ENCODE measurements at regions of chr19 and their contacts with region 1.

Region 1: DNA sequence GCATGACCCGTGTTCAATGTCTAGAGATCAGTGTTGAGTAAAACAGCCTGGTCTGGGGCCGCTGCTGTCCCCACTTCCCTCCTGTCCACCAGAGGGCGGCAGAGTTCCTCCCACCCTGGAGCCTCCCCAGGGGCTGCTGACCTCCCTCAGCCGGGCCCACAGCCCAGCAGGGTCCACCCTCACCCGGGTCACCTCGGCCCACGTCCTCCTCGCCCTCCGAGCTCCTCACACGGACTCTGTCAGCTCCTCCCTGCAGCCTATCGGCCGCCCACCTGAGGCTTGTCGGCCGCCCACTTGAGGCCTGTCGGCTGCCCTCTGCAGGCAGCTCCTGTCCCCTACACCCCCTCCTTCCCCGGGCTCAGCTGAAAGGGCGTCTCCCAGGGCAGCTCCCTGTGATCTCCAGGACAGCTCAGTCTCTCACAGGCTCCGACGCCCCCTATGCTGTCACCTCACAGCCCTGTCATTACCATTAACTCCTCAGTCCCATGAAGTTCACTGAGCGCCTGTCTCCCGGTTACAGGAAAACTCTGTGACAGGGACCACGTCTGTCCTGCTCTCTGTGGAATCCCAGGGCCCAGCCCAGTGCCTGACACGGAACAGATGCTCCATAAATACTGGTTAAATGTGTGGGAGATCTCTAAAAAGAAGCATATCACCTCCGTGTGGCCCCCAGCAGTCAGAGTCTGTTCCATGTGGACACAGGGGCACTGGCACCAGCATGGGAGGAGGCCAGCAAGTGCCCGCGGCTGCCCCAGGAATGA is 1.5 kb upstream of the CEACAM5 start:
- H3K4me3 ChIP-seq: peak overlapping the region; percentile 30
- H3K27ac ChIP-seq: no peak overlapping the region
- H3K4me1 ChIP-seq: peaks cover 2% of the 10 kb centered on the region; the same call in 1 of the 2 replicates
- CTCF ChIP-seq: peak; percentile 100

Region 2: GRCh38 chr19:40533508-40533907 is 1173.4 kb before region 1 on chr19:
- CTCF ChIA-PET with region 1: no interaction called
- POLR2A ChIA-PET with region 1: no interaction called
- H3K4me3 ChIP-seq: no peak overlapping the region
- H3K27ac ChIP-seq: no peak overlapping the region
- H3K4me1 ChIP-seq: peaks cover 17% of the 10 kb centered on the region
- CTCF ChIP-seq: 0 out of 2 replicates have a peak, but pooled peaks have one; percentile 6

Region 3: GRCh38 chr19:41288673-41289505 is 418.0 kb before region 1 on chr19:
- CTCF ChIA-PET with region 1: no interaction called
- POLR2A ChIA-PET with region 1: no interaction called
- H3K4me3 ChIP-seq: no peak overlapping the region
- H3K27ac ChIP-seq: peak overlapping the region; percentile 36; the same call in 1 of the 2 replicates
- H3K4me1 ChIP-seq: no peaks in the 10 kb centered on the region
- CTCF ChIP-seq: no peak

Region 4: GRCh38 chr19:41462497-41462896 is 244.4 kb before region 1 on chr19:
- CTCF ChIA-PET with region 1: no interaction called
- POLR2A ChIA-PET with region 1: no interaction called
- H3K4me3 ChIP-seq: no peak overlapping the region
- H3K27ac ChIP-seq: no peak overlapping the region
- H3K4me1 ChIP-seq: no peaks in the 10 kb centered on the region
- CTCF ChIP-seq: no peak

Region 5: GRCh38 chr19:41641879-41642485 is 64.9 kb before region 1 on chr19:
- CTCF ChIA-PET with region 1: interaction called, 41 read pairs
- POLR2A ChIA-PET with region 1: no interaction called
- H3K4me3 ChIP-seq: no peak overlapping the region
- H3K27ac ChIP-seq: no peak overlapping the region
- H3K4me1 ChIP-seq: no peaks in the 10 kb centered on the region
- CTCF ChIP-seq: peak; percentile 75

Region 6: DNA sequence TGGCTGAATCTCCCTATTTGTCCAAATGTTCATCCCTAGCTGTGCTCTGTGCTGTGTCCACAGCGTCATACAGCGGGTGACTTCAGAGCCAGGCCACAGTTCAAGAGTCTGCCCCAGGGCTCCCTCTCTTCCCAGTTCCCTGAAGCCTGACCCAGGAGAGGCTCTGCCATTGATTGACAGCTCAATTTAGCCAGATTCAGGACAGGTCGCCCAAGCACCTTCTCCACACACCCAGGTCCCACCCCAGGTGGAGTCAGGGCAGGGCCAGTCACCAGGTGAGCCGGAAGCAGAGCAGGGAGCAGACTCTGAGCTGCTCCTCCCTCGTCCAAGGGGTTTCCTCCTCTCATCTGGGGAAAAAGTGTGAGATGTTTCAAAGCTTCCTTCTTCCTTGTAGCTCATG is 24.5 kb before region 1 on chr19:
- CTCF ChIA-PET with region 1: interaction called, 15 read pairs
- POLR2A ChIA-PET with region 1: no interaction called
- H3K4me3 ChIP-seq: no peak overlapping the region
- H3K27ac ChIP-seq: no peak overlapping the region
- H3K4me1 ChIP-seq: no peaks in the 10 kb centered on the region
- CTCF ChIP-seq: no peak

Region 7: GRCh38 chr19:41734617-41735016 is 27.7 kb after region 1 on chr19:
- CTCF ChIA-PET with region 1: interaction called, 34 read pairs
- POLR2A ChIA-PET with region 1: no interaction called
- H3K4me3 ChIP-seq: no peak overlapping the region
- H3K27ac ChIP-seq: no peak overlapping the region
- H3K4me1 ChIP-seq: no peaks in the 10 kb centered on the region
- CTCF ChIP-seq: no peak

Region 8: DNA sequence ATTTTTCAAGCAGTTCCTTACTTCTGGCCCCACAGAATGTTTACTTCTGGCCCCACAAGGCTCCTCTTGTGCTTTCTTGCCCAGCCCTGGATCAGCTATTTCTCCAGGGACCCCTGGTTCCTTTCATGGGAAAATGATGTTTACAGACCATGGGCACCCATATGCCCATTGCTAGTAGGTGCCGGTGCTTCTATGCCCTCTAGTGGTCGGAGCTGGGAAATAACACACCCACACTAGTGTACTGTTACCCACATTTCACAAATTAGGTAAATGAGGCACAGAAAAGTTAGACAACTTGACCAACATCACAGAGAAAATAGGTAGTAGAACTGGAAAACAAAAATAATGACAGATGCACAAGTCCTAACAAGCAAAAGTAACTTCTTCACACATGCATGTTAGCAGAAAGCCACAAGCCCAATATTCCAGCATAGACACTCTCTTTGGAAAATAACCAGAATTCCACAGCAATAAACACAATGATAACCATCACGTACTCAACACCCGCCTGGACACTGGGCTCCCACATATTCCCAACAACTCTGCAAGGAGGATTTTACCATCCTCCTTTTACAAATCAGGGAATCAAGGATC is 47.1 kb after region 1 on chr19:
- CTCF ChIA-PET with region 1: interaction called, 26 read pairs
- POLR2A ChIA-PET with region 1: no interaction called
- H3K4me3 ChIP-seq: no peak overlapping the region
- H3K27ac ChIP-seq: no peak overlapping the region
- H3K4me1 ChIP-seq: peaks cover 6% of the 10 kb centered on the region; the same call in 1 of the 2 replicates
- CTCF ChIP-seq: peak; percentile 37; the same call in 1 of the 2 replicates

Region 9: DNA sequence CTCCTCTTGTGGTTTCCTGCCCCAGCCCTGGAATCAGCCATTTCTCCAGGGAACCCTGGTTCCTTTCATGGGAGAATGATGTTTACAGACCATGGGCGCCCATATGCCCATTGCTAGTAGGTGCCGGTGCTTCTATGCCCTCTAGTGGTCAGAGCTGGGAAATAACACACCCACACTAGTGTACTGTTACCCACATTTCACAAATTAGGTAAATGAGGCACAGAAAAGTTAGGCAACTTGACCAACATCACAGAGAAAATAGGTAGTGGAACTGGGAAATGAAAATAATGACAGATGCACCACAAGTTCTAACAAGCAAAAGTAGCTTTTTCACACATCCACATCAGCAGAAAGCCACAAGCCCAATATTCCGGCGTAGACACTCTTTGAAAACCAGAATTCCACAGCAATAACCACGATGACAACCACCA is 88.1 kb after region 1 on chr19:
- CTCF ChIA-PET with region 1: interaction called, 25 read pairs
- POLR2A ChIA-PET with region 1: no interaction called
- H3K4me3 ChIP-seq: no peak overlapping the region
- H3K27ac ChIP-seq: no peak overlapping the region
- H3K4me1 ChIP-seq: no peaks in the 10 kb centered on the region
- CTCF ChIP-seq: peak; percentile 79

Region 10: GRCh38 chr19:41821003-41821735 is 114.2 kb after region 1 on chr19:
- CTCF ChIA-PET with region 1: interaction called, 15 read pairs
- POLR2A ChIA-PET with region 1: interaction called, 3 read pairs
- H3K4me3 ChIP-seq: no peak overlapping the region
- H3K27ac ChIP-seq: no peak overlapping the region
- H3K4me1 ChIP-seq: no peaks in the 10 kb centered on the region
- CTCF ChIP-seq: peak; percentile 86

Region 11: DNA sequence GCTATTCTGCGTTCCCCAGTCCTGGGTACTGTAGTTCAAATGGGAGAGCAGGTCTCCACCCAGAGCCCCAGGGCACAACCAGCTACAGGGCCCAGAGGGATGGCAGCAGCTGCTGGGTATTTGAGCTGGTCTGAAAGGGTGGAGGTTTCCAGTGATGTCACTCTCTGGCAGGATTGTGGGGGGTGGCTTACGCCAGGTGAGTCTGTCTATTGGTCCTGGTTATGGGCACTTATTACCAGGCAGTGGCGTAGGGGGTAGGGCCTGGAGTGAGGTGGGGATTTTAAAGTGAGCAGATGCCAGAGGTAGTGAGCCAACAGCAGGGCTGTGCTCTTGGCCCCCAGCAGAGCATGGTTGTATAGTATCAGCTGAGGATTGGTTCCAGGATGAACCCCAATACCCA is 159.4 kb after region 1 on chr19:
- CTCF ChIA-PET with region 1: no interaction called
- POLR2A ChIA-PET with region 1: no interaction called
- H3K4me3 ChIP-seq: no peak overlapping the region
- H3K27ac ChIP-seq: peak overlapping the region; percentile 59
- H3K4me1 ChIP-seq: peaks cover 27% of the 10 kb centered on the region
- CTCF ChIP-seq: no peak

Measured in HEK293 (cell line).